PC-3 (cell line): ENCODE measurements at regions of chr1 and their contacts with region 1.

Region 1: GRCh38 chr1:168920456-168921094 is 185.9 kb upstream of the ATP1B1 start:
- DNase-seq: peak; percentile 97
- ATAC-seq: peak; percentile 92
- H3K4me3 ChIP-seq: peak overlapping the region; percentile 29
- H3K27ac ChIP-seq: peak overlapping the region; percentile 99
- H3K4me1 ChIP-seq: peaks cover 60% of the 10 kb centered on the region
- H3K27me3 ChIP-seq: no peaks in the 10 kb centered on the region
- CTCF ChIP-seq: no peak

Region 2: DNA sequence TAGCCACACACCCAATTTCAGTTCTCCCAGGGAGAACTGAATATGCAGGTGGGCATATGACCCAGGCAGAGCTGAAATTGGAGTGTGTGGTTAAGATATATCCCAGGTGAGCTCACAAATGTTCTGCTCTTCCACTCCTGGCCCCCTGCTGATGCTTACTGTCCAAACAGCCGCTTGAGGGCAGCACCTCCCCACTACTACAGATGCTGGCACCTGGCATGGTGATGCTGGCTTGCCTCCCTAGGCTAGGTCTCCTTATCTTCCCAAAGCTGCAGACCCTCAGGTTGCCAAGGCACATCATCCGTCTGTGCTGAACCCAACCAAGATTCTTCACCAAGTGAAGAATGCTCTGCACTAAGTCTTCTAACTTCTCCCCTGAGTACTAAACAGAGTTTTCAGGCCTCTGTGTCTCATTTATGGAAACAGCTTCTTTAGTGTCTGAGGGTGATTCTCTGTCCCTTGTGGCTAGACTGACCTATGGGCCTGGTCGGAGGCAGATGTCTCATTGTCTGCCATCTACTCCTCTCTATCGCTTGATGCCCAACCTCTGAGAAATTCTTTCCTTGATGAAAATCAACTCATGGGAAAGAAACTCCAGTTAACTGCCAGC is 317.0 kb before region 1 on chr1:
- CTCF ChIA-PET with region 1: interaction called, 3 read pairs
- POLR2A ChIA-PET with region 1: no interaction called
- intact Hi-C with region 1: loop called (anchors 10 kb)
- DNase-seq: peak; percentile 85
- ATAC-seq: peak; percentile 95
- H3K4me3 ChIP-seq: no peak overlapping the region
- H3K27ac ChIP-seq: no peak overlapping the region
- H3K4me1 ChIP-seq: peaks cover 8% of the 10 kb centered on the region; the same call in 1 of the 2 replicates
- H3K27me3 ChIP-seq: no peaks in the 10 kb centered on the region
- CTCF ChIP-seq: peak; percentile 97

Region 3: GRCh38 chr1:168628807-168629206 is 291.8 kb before region 1 on chr1:
- CTCF ChIA-PET with region 1: no interaction called
- POLR2A ChIA-PET with region 1: no interaction called
- intact Hi-C with region 1: loop called (anchors 2 kb)
- DNase-seq: peak; percentile 98
- ATAC-seq: peak; percentile 97
- H3K4me3 ChIP-seq: peak overlapping the region; percentile 6; the same call in 1 of the 2 replicates
- H3K27ac ChIP-seq: peak overlapping the region; percentile 84
- H3K4me1 ChIP-seq: peaks cover 34% of the 10 kb centered on the region
- H3K27me3 ChIP-seq: no peaks in the 10 kb centered on the region
- CTCF ChIP-seq: no peak

Region 4: GRCh38 chr1:168709405-168710305 is 210.9 kb before region 1 on chr1:
- CTCF ChIA-PET with region 1: no interaction called
- POLR2A ChIA-PET with region 1: no interaction called
- intact Hi-C with region 1: loop called (anchors 1 kb)
- DNase-seq: peak; percentile 99
- ATAC-seq: peak; percentile 83
- H3K4me3 ChIP-seq: peak overlapping the region; percentile 43
- H3K27ac ChIP-seq: peak overlapping the region; percentile 98
- H3K4me1 ChIP-seq: peaks cover 27% of the 10 kb centered on the region
- H3K27me3 ChIP-seq: no peaks in the 10 kb centered on the region
- CTCF ChIP-seq: no peak

Region 5: DNA sequence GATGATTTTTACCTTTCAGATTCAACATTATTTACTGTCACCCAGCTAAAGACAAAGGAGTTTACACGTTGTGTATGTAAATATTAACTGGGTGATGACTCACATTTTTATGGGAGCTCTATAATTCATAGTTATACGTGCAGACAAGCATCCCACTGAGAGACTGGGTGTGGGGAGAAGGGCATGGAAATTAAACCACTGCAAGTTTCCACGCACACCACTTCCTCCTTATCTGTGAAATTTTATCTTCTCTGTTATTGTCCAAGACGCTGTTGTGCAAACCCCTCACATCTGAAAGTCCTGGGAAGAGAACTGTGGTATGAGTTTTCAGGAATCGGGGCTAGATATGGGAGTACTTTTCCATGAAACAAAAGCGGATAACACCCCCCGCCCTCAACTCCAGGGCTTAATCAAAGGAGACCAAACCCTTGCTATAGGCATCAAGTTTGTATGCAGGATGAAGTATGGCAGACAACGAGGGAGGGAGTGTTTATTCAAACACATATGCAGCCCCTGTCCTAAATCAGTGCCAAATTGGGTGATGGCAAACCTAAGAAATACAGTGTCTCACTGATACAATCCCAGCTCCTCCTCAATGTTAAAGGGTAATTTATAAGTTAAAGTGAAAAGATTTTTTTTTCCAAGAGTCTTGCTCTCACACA is 168.3 kb before region 1 on chr1:
- CTCF ChIA-PET with region 1: no interaction called
- POLR2A ChIA-PET with region 1: no interaction called
- intact Hi-C with region 1: loop called (anchors 1 kb)
- DNase-seq: peak; percentile 91
- ATAC-seq: peak; percentile 92
- H3K4me3 ChIP-seq: peak overlapping the region; percentile 47
- H3K27ac ChIP-seq: peak overlapping the region; percentile 77
- H3K4me1 ChIP-seq: peaks cover 24% of the 10 kb centered on the region
- H3K27me3 ChIP-seq: no peaks in the 10 kb centered on the region
- CTCF ChIP-seq: no peak

Region 6: GRCh38 chr1:168958562-168959289 is 38.2 kb after region 1 on chr1:
- CTCF ChIA-PET with region 1: no interaction called
- POLR2A ChIA-PET with region 1: no interaction called
- intact Hi-C with region 1: no loop called
- DNase-seq: no peak
- ATAC-seq: no peak
- H3K4me3 ChIP-seq: no peak overlapping the region
- H3K27ac ChIP-seq: no peak overlapping the region
- H3K4me1 ChIP-seq: peaks cover 9% of the 10 kb centered on the region
- H3K27me3 ChIP-seq: no peaks in the 10 kb centered on the region
- CTCF ChIP-seq: no peak

Region 7: GRCh38 chr1:169060906-169061639 is 140.5 kb after region 1 on chr1:
- CTCF ChIA-PET with region 1: no interaction called
- POLR2A ChIA-PET with region 1: interaction called, 6 read pairs
- intact Hi-C with region 1: loop called (anchors 1 kb)
- DNase-seq: peak; percentile 66
- ATAC-seq: peak; percentile 10
- H3K4me3 ChIP-seq: peak overlapping the region; percentile 8; the same call in 1 of the 2 replicates
- H3K27ac ChIP-seq: peak overlapping the region; percentile 93
- H3K4me1 ChIP-seq: peaks cover 34% of the 10 kb centered on the region
- H3K27me3 ChIP-seq: no peaks in the 10 kb centered on the region
- CTCF ChIP-seq: no peak

Region 8: DNA sequence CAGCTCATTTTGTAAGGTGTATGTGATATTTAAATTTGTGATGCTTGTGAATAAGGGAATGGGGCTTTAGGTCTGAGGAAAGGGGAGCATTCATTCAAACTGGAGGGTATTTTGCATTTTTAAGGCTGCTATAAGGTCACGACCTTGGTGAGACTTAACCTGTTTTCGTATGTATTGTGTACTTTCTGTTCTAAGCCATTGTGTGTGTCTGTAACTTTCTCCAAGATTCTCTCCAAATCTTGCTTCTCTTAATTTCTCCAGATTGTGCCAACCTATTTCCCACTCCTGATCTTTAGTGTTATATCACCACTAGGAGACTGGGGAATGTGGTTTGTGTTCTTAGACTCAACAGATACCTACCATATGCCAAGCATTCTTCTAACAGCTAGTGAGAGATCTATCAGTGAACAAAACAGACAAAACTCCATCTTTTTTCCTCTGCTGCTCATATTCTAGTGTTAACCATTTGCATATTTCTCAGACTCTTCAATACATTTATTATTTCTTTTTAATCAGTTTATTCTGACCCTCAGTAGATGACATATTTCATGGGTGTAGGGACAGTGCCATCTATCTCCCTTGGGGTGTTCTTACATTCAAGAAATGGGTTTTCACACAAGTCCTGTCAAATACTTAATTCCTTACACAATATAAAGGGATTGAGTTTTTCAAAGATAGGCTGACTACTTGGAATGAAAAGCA is 213.4 kb after region 1 on chr1:
- CTCF ChIA-PET with region 1: no interaction called
- POLR2A ChIA-PET with region 1: no interaction called
- intact Hi-C with region 1: loop called (anchors 5 kb)
- DNase-seq: peak; percentile 34
- ATAC-seq: peak; percentile 33
- H3K4me3 ChIP-seq: no peak overlapping the region
- H3K27ac ChIP-seq: no peak overlapping the region
- H3K4me1 ChIP-seq: peaks cover 27% of the 10 kb centered on the region
- H3K27me3 ChIP-seq: no peaks in the 10 kb centered on the region
- CTCF ChIP-seq: peak; percentile 66